Activated T-helper 2 cell treated with anti-CD3 and anti-CD28 coated beads, Interferon-gamma antibody, Interleukin-2, Interleukin-4, amounts not matched to agents 10 μg/mL and 5 μg/mL and 100 μg/mL, durations not matched to agents 14 hours and 24 hours and 36 hours (primary cell): ENCODE measurements at regions of chr6 and their contacts with region 1.

Region 1: GRCh38 chr6:83884523-83884922 is 25.0 kb downstream of the CYB5R4 start:
- DNase-seq: no peak
- H3K4me3 Mint-ChIP-seq: no peak overlapping the region
- H3K27ac Mint-ChIP-seq: no peak overlapping the region
- H3K4me1 Mint-ChIP-seq: peaks cover 10% of the 10 kb centered on the region
- H3K27me3 Mint-ChIP-seq: no peaks in the 10 kb centered on the region

Region 2: GRCh38 chr6:84033523-84034451 is 149.3 kb after region 1 on chr6 and contains the start of gene MRAP2:
- intact Hi-C with region 1: loop called (anchors 10 kb)
- DNase-seq: no peak
- H3K4me3 Mint-ChIP-seq: peak within 1 kb of the TSS; percentile 30
- H3K27ac Mint-ChIP-seq: no peak within 1 kb of the TSS
- H3K4me1 Mint-ChIP-seq: peaks cover 3% of the 10 kb centered on the region
- H3K27me3 Mint-ChIP-seq: peaks cover 34% of the 10 kb centered on the region
- total RNA-seq, gene MRAP2: 0.07 TPM in 1 of 2 replicates, not detected in the other

Region 3: DNA sequence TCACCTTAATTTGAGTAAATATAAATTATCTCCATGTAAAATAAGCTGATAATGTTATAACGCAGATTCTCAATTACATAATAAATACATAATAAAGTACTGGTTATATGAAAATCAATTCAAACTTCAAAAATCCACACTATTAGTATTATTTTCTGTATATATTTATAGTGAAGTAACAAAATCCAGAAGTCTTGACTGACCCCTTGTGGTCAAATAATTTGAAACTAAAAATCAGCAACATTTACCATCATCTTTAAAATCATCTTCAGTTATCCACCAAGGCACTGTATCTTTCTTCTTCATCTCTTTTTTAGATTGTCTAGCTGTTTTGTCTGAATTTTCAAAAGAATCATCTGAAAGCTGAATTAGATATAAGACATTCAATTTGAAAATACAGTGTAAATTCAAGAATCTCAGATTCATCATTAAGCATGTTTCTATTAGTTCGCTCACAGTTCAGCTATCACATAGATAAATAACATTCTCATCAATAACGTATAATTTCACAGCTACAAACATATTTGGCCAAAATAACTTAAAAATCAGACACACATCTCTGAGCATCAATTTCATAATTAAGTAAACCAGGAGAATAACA is 336.4 kb after region 1 on chr6:
- intact Hi-C with region 1: loop called (anchors 1 kb)
- DNase-seq: no peak
- H3K4me3 Mint-ChIP-seq: no peak overlapping the region
- H3K27ac Mint-ChIP-seq: no peak overlapping the region
- H3K4me1 Mint-ChIP-seq: peaks cover 8% of the 10 kb centered on the region
- H3K27me3 Mint-ChIP-seq: no peaks in the 10 kb centered on the region

Region 4: DNA sequence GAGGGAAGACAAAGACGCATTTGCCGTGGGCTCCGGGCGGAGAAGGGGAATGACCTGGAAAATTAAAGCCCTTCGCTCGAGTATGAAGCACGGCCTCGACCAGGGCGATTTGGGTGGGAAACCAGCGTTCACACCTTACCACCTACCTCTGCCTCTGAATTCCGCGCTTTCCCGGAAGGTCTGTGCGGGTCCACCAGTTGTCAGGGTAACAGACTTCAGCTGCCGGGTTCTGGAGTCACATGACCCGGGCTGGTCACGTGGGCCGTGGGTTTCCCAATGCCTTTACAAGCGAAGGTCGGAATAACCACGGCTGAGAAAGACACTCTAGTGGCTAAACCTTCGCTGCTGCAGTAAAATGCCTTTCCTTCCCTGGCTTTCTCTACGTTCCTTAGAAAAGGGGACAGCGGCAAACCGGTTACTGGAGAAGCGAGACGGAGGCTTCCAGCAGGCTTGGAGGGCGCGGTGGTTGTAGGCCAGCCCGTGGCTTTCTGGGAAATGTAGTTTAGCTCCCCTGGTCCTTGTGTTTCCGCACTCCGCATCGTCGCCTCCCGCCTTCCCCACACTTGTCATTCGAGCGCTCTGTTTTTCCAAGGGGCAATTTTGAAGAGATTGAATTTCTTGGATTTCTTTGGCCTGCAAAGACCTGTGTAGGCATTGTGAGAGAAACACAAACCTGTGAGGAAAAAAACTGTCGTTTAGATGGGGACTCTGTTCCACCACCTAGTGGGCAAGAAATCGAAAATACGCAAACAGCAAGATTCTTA is 343.1 kb after region 1 on chr6 and contains the start of gene CEP162:
- intact Hi-C with region 1: loop called (anchors 1 kb)
- DNase-seq: peak; percentile 85
- H3K4me3 Mint-ChIP-seq: peak within 1 kb of the TSS; percentile 97
- H3K27ac Mint-ChIP-seq: peak within 1 kb of the TSS; percentile 87
- H3K4me1 Mint-ChIP-seq: peaks cover 17% of the 10 kb centered on the region
- H3K27me3 Mint-ChIP-seq: peaks cover 12% of the 10 kb centered on the region
- total RNA-seq, gene CEP162: 3.3 and 4.2 TPM in 2 replicates

Region 5: DNA sequence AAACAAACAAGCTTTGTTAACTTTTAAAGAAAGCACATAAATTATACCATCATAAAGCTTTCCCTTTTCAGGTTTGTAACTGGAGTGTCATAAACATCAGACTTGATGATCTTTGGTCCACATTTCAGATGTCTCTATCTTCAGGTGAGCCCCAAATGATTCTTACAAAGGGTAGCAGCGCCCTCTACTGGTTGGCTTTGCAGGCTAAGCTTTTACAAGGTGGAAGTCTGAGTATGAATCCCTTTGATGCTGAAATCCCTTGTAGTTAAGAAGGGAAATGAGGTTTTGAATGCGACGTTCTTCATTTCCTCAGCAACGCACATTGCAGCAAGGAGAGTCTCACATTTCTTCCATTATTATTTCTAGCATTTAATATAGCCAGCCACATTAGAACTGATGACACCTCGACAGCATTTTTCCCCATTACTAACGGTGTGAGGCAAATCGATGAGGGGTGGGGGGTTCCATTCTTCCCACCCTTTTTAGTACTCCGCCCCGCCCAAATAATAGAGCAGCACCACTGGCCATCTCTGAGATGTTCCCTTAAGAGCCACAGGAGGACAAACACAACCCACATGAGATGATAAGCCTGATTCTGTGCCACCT is 1439.0 kb after region 1 on chr6:
- intact Hi-C with region 1: loop called (anchors 2 kb)
- DNase-seq: peak; percentile 48
- H3K4me3 Mint-ChIP-seq: no peak overlapping the region
- H3K27ac Mint-ChIP-seq: no peak overlapping the region
- H3K4me1 Mint-ChIP-seq: no peaks in the 10 kb centered on the region
- H3K27me3 Mint-ChIP-seq: peaks cover 2% of the 10 kb centered on the region